T-cell (primary cell): ENCODE measurements at regions of chr2 and their contacts with region 1.

Region 1: DNA sequence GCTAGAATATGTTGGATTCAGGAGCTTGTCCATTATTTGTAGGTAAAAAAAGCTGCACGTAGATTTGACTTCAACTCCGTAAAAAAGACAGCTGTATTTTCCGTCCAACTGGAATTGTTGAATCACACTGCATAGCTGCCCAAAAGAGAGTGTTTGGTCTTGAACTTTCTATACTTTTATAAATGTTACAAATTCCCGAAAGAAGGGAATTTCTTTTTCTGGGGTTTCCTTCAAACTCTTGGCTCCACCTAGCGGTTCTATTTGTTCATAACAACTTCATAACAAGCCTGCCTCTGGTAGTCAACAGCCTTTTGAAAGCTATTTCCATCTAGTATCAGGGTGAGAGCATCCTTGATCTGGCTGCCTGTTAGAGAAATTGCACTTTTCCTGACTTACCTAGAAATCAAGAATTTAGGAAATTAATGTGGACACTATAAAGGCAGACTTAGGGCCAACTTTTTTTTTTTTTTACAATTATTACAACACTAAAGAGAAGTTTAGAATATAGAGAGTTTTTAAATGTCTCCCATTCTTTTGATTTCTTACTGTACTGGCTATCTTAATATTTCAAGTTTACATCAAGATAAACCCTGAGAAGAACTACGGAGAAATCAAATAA is 48.1 kb downstream of the TMEM185B start:
- DNase-seq: peak in 2 of 35 experiments; percentile 30 to 79
- ATAC-seq: no peak
- H3K4me3 ChIP-seq: no peak overlapping the region
- H3K4me3 Mint-ChIP-seq: no peak overlapping the region
- H3K27ac ChIP-seq: peak overlapping the region; percentile 48
- H3K27ac Mint-ChIP-seq: peak overlapping the region; percentile 78 to 100
- H3K4me1 ChIP-seq: peaks cover 36 to 39% of the 10 kb centered on the region in 2 experiments
- H3K4me1 Mint-ChIP-seq: peaks cover 45 to 52% (median 49%) of the 10 kb centered on the region in 3 donors
- H3K27me3 ChIP-seq: no peaks in the 10 kb centered on the region
- H3K27me3 Mint-ChIP-seq: no peaks in the 10 kb centered on the region

Region 2: GRCh38 chr2:119641562-119642258 is 533.4 kb before region 1 on chr2:
- CTCF ChIA-PET with region 1: interaction called, 3 to 19 read pairs
- POLR2A ChIA-PET with region 1: no interaction called
- DNase-seq: peak; percentile 27 to 83 (median 63)
- ATAC-seq: peak; percentile 78 to 94 (median 88)
- H3K4me3 ChIP-seq: no peak overlapping the region
- H3K4me3 Mint-ChIP-seq: no peak overlapping the region
- H3K27ac ChIP-seq: no peak overlapping the region
- H3K27ac Mint-ChIP-seq: no peak overlapping the region
- H3K4me1 ChIP-seq: peaks cover 0 to 2% of the 10 kb centered on the region in 2 experiments
- H3K4me1 Mint-ChIP-seq: peaks cover 0 to 4% (median 4%) of the 10 kb centered on the region in 3 donors
- H3K27me3 ChIP-seq: peaks cover 0 to 3% of the 10 kb centered on the region in 2 experiments
- H3K27me3 Mint-ChIP-seq: peaks cover 11 to 14% of the 10 kb centered on the region in 2 donors

Region 3: DNA sequence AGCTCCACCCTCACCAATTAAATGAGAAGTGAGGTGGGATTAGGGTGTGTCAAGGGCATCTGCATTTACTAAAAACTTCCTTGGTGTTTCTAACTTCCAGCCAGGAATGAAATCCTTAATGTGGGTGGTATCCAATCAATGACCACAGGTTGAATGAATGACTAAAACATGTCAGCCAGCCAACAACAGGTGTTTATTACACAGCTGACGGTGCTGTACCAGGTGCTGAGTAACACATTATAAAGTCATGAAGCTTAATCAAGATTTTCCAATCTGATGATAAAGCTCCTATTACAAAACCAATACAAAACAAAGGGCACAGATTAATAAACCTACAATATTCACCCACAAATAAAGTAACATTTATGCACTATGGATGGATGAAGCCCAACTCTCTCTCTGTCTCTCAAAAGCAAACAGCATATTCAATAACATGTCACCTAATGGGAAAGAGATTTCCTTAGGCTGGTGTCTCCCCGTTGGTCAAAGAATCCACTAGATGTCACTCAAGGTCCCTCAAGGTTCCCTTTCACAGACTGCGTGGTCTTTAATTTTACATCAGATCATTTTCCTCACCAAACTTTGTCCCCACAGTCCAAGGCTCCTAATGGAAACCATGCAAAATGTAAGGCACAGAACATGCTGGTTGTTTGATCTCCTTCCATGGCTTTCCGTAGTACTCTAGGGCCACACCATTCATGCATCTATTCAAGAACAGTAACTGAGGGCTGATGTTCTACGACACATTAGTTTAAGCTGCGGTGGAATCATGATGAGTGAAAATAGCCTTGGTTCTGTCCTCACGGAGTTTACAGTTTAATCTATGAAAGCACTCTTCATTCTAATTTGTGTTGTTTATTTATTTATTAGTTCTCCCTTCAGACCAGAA is 421.8 kb before region 1 on chr2:
- CTCF ChIA-PET with region 1: interaction called, 3 to 22 read pairs
- POLR2A ChIA-PET with region 1: no interaction called
- DNase-seq: peak in 21 of 35 experiments; percentile 5 to 77 (median 23)
- ATAC-seq: peak; percentile 71 to 93 (median 88)
- H3K4me3 ChIP-seq: no peak overlapping the region
- H3K4me3 Mint-ChIP-seq: no peak overlapping the region
- H3K27ac ChIP-seq: no peak overlapping the region
- H3K27ac Mint-ChIP-seq: no peak overlapping the region
- H3K4me1 ChIP-seq: no peaks in the 10 kb centered on the region
- H3K4me1 Mint-ChIP-seq: peaks cover 5 to 8% (median 6%) of the 10 kb centered on the region in 3 donors
- H3K27me3 ChIP-seq: no peaks in the 10 kb centered on the region
- H3K27me3 Mint-ChIP-seq: peaks cover 0 to 2% of the 10 kb centered on the region in 2 donors

Region 4: GRCh38 chr2:120109186-120110061 is 65.6 kb before region 1 on chr2:
- CTCF ChIA-PET with region 1: interaction called, 11 to 35 read pairs
- POLR2A ChIA-PET with region 1: interaction called in 1 of 2 experiments, 3 read pairs
- DNase-seq: peak in 3 of 35 experiments; percentile 2 to 59 (median 18)
- ATAC-seq: peak; percentile 85 to 96 (median 95)
- H3K4me3 ChIP-seq: peak overlapping the region in 1 of 2 donors; percentile 33
- H3K4me3 Mint-ChIP-seq: peak overlapping the region; percentile 49 to 66 (median 59)
- H3K27ac ChIP-seq: no peak overlapping the region
- H3K27ac Mint-ChIP-seq: peak overlapping the region; percentile 82 to 85
- H3K4me1 ChIP-seq: peaks cover 0 to 20% of the 10 kb centered on the region in 2 experiments
- H3K4me1 Mint-ChIP-seq: peaks cover 22 to 37% (median 26%) of the 10 kb centered on the region in 3 donors
- H3K27me3 ChIP-seq: no peaks in the 10 kb centered on the region
- H3K27me3 Mint-ChIP-seq: no peaks in the 10 kb centered on the region

Region 5: GRCh38 chr2:120231974-120232635 is 57.0 kb after region 1 on chr2:
- CTCF ChIA-PET with region 1: interaction called, 3 to 13 read pairs
- POLR2A ChIA-PET with region 1: interaction called in 1 of 2 experiments, 4 read pairs
- DNase-seq: peak; percentile 29 to 85 (median 54)
- ATAC-seq: peak; percentile 88 to 93 (median 89)
- H3K4me3 ChIP-seq: peak overlapping the region; percentile 68 to 76
- H3K4me3 Mint-ChIP-seq: peak overlapping the region; percentile 93 to 96 (median 93)
- H3K27ac ChIP-seq: peak overlapping the region; percentile 95
- H3K27ac Mint-ChIP-seq: peak overlapping the region; percentile 95 to 97
- H3K4me1 ChIP-seq: peaks cover 29 to 37% of the 10 kb centered on the region in 2 experiments
- H3K4me1 Mint-ChIP-seq: peaks cover 59 to 63% (median 62%) of the 10 kb centered on the region in 3 donors
- H3K27me3 ChIP-seq: peaks cover 0 to 2% of the 10 kb centered on the region in 2 experiments
- H3K27me3 Mint-ChIP-seq: no peaks in the 10 kb centered on the region

Region 6: GRCh38 chr2:120312861-120313694 is 138.0 kb after region 1 on chr2:
- CTCF ChIA-PET with region 1: interaction called, 6 to 13 read pairs
- POLR2A ChIA-PET with region 1: no interaction called
- DNase-seq: peak; percentile 30 to 79 (median 60)
- ATAC-seq: peak; percentile 74 to 83 (median 78)
- H3K4me3 ChIP-seq: peak overlapping the region; percentile 40 to 69
- H3K4me3 Mint-ChIP-seq: peak overlapping the region; percentile 71 to 76 (median 72)
- H3K27ac ChIP-seq: no peak overlapping the region
- H3K27ac Mint-ChIP-seq: peak overlapping the region in 1 of 2 donors; percentile 72
- H3K4me1 ChIP-seq: peaks cover 11 to 29% of the 10 kb centered on the region in 2 experiments
- H3K4me1 Mint-ChIP-seq: peaks cover 25 to 30% (median 29%) of the 10 kb centered on the region in 3 donors
- H3K27me3 ChIP-seq: peaks cover 0 to 30% of the 10 kb centered on the region in 2 experiments
- H3K27me3 Mint-ChIP-seq: no peaks in the 10 kb centered on the region